Activated CD8-positive, alpha-beta T cell treated with anti-CD3 and anti-CD28 coated beads for 36 hours (primary cell): ENCODE measurements at regions of chr10 and their contacts with region 1.

Region 1: GRCh38 chr10:123008439-123009205 is at the starts of genes ACADSB and IKZF5:
- DNase-seq: peak; percentile 98
- ATAC-seq: peak; percentile 96
- H3K4me3 Mint-ChIP-seq: peak within 1 kb of the TSS; percentile 94
- H3K27ac Mint-ChIP-seq: peak within 1 kb of the TSS; percentile 99
- H3K4me1 Mint-ChIP-seq: peaks cover 37% of the 10 kb centered on the region
- H3K27me3 Mint-ChIP-seq: no peaks in the 10 kb centered on the region
- CTCF ChIP-seq: no peak
- total RNA-seq, gene ACADSB: 19.7 to 20.7 TPM
- total RNA-seq, gene IKZF5: 15.2 to 21.5 TPM

Region 2: DNA sequence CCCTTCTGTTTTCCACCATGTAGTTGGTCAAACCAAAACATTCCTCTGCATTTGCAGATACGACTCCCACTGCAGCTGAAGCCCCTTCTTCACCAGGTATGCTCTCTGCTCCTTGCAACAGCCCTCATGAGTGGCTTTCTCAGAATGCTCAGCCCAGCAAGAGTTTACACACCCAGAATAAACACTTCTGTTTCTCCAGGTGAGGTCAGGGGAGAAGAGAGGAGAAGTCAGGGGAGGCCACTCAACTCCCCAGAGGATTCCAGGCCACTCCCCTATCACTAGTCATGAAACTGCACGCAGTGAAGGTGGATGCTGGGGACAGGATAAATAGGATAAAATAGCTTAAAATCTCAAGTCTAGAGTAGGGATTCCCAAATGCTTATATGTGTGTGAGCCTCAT is 194.1 kb before region 1 on chr10:
- CTCF ChIA-PET with region 1: no interaction called
- POLR2A ChIA-PET with region 1: no interaction called
- intact Hi-C with region 1: no loop called
- DNase-seq: no peak
- ATAC-seq: no peak
- H3K4me3 Mint-ChIP-seq: no peak overlapping the region
- H3K27ac Mint-ChIP-seq: no peak overlapping the region
- H3K4me1 Mint-ChIP-seq: no peaks in the 10 kb centered on the region
- H3K27me3 Mint-ChIP-seq: peaks cover 16% of the 10 kb centered on the region
- CTCF ChIP-seq: no peak

Region 3: GRCh38 chr10:122953827-122954730 is 54.5 kb before region 1 on chr10 and contains the start of gene C10orf88:
- CTCF ChIA-PET with region 1: no interaction called
- POLR2A ChIA-PET with region 1: interaction called, 7 read pairs
- intact Hi-C with region 1: loop called (anchors 2 kb)
- DNase-seq: peak; percentile 97
- ATAC-seq: peak; percentile 97
- H3K4me3 Mint-ChIP-seq: peak within 1 kb of the TSS; percentile 82
- H3K27ac Mint-ChIP-seq: peak within 1 kb of the TSS; percentile 77
- H3K4me1 Mint-ChIP-seq: peaks cover 24% of the 10 kb centered on the region
- H3K27me3 Mint-ChIP-seq: no peaks in the 10 kb centered on the region
- CTCF ChIP-seq: no peak
- total RNA-seq, gene C10orf88: 6.3 to 9.1 TPM

Region 4: GRCh38 chr10:122980209-122981065 is 28.2 kb before region 1 on chr10 and contains the start of gene PSTK:
- CTCF ChIA-PET with region 1: interaction called, 30 read pairs
- POLR2A ChIA-PET with region 1: interaction called, 38 read pairs
- intact Hi-C with region 1: no loop called
- DNase-seq: peak; percentile 92
- ATAC-seq: peak; percentile 98
- H3K4me3 Mint-ChIP-seq: peak within 1 kb of the TSS; percentile 75
- H3K27ac Mint-ChIP-seq: peak within 1 kb of the TSS; percentile 96
- H3K4me1 Mint-ChIP-seq: peaks cover 16% of the 10 kb centered on the region
- H3K27me3 Mint-ChIP-seq: no peaks in the 10 kb centered on the region
- CTCF ChIP-seq: peak; percentile 89
- total RNA-seq, gene PSTK: 4.3 to 4.8 TPM

Region 5: GRCh38 chr10:122990278-122990677 is 18.3 kb before region 1 on chr10:
- CTCF ChIA-PET with region 1: interaction called, 4 read pairs
- POLR2A ChIA-PET with region 1: interaction called, 38 read pairs
- intact Hi-C with region 1: no loop called
- DNase-seq: no peak
- ATAC-seq: no peak
- H3K4me3 Mint-ChIP-seq: no peak overlapping the region
- H3K27ac Mint-ChIP-seq: no peak overlapping the region
- H3K4me1 Mint-ChIP-seq: no peaks in the 10 kb centered on the region
- H3K27me3 Mint-ChIP-seq: no peaks in the 10 kb centered on the region
- CTCF ChIP-seq: no peak